PC-9 (cell line): ENCODE measurements at regions of chr12 and their contacts with region 1.

Region 1: DNA sequence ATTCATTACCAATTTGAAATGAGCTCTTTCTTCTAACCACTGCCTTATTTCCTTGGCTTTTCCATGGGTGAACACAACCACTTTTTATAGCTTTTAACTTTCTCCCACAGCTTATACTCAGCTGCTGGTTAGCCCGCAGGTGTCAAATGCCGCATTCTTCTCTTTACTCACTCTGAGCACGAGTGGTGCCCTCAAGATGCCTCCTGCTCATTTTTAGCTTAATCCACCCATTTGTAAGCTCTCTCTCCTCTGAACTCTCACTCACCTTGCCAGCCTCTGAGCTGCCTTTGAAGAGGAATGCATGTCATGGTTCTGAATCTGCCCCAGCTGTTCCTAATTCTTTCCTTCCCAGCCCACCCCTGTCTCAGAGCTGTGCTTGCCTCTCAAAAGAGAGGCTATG is 449.4 kb upstream of the PRICKLE1 start:
- DNase-seq: no peak
- H3K4me3 ChIP-seq: no peak overlapping the region
- H3K27ac ChIP-seq: no peak overlapping the region
- H3K4me1 ChIP-seq: no peaks in the 10 kb centered on the region
- H3K27me3 ChIP-seq: no peaks in the 10 kb centered on the region
- CTCF ChIP-seq: no peak

Region 2: DNA sequence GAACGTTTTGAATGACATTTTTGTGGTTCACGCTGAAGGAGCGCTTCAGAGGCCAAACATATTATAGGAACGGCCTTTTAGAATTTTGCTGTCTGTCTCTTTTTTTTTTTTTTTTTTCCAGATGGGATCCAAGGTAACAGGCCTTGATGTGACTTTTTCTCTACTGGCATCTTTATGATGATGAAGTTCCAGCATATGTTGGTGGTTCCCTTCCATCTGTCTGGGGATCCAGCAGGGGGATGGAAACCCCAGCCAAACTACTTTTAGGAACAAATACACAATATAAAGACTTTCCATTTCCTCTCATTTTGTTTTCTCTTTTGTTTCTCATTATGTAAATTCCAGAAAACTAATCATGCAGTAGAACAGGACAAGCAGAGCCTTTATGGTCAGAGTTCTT is 210.2 kb before region 1 on chr12:
- CTCF ChIA-PET with region 1: no interaction called
- POLR2A ChIA-PET with region 1: interaction called, 11 read pairs
- intact Hi-C with region 1: no loop called
- DNase-seq: no peak
- H3K4me3 ChIP-seq: no peak overlapping the region
- H3K27ac ChIP-seq: no peak overlapping the region
- H3K4me1 ChIP-seq: no peaks in the 10 kb centered on the region
- H3K27me3 ChIP-seq: no peaks in the 10 kb centered on the region
- CTCF ChIP-seq: no peak

Region 3: DNA sequence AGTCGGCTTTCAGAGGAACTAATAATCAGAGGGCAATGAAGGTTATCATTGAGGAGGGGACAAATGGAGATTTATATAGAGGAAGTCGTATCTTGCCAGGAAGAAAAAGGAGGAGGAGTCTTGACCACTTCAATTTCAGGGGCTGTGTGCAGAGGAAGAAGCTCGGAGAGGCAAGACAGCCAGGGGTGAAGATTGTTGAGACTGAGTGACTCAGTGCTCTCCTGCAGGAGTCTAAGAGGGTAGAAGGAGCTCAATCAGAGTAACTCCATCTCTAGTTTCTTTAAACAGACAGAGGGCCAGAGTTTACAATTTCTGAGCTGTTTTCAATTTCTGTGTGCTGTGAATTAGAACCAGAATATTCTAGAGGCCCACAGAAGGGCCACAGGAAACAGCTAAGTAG is 10.2 kb before region 1 on chr12:
- CTCF ChIA-PET with region 1: no interaction called
- POLR2A ChIA-PET with region 1: no interaction called
- intact Hi-C with region 1: no loop called
- DNase-seq: no peak
- H3K4me3 ChIP-seq: no peak overlapping the region
- H3K27ac ChIP-seq: no peak overlapping the region
- H3K4me1 ChIP-seq: no peaks in the 10 kb centered on the region
- H3K27me3 ChIP-seq: no peaks in the 10 kb centered on the region
- CTCF ChIP-seq: no peak

Region 4: GRCh38 chr12:43104524-43104923 is 65.5 kb after region 1 on chr12:
- CTCF ChIA-PET with region 1: no interaction called
- POLR2A ChIA-PET with region 1: no interaction called
- intact Hi-C with region 1: no loop called
- DNase-seq: no peak
- H3K4me3 ChIP-seq: no peak overlapping the region
- H3K27ac ChIP-seq: no peak overlapping the region
- H3K4me1 ChIP-seq: no peaks in the 10 kb centered on the region
- H3K27me3 ChIP-seq: no peaks in the 10 kb centered on the region
- CTCF ChIP-seq: no peak

Region 5: DNA sequence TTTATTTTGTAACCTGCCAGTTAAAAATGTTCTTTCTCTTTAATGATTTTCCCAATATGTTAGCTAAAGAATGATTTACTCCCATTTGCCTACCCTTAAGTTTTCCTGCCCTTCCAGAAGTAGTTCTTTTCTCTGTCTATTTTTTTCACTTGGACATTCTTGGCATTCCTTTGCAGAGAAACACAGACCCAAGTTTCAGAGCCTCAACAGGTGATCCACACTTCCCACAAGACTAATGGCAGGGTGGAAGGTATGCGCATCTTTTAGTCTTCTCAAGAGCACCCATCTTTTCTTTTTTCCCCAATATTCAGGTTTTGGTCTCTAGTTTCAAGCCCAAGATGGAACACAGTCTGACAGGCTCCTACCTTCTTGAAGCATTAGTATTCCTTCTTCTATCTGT is 92.3 kb after region 1 on chr12:
- CTCF ChIA-PET with region 1: no interaction called
- POLR2A ChIA-PET with region 1: no interaction called
- intact Hi-C with region 1: no loop called
- DNase-seq: no peak
- H3K4me3 ChIP-seq: no peak overlapping the region
- H3K27ac ChIP-seq: no peak overlapping the region
- H3K4me1 ChIP-seq: no peaks in the 10 kb centered on the region
- H3K27me3 ChIP-seq: no peaks in the 10 kb centered on the region
- CTCF ChIP-seq: no peak